ENCODE measurements at regions of chr6 and their contacts with region 1.

Region 1: DNA sequence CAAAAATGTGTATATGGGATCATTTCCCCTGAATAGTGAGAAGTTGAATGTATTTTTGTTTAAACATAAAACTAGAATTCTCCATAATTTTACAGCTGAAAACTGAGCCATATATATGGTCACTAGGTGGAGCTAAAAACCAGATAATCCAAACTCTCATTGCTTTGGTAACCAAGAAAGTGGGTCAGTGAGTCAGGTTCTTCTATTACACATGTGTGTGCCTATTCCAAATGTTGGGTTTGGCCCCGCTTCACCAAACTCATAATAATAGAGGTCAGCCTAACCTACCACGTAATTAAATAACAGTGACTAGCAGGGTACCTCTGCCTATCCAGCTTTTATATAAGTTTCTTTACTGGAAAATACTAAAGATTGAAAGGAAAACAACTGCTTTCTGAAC is 19.3 kb upstream of the RNGTT start:
- DNase-seq: peak in 7 of 9 donors; percentile 29 to 62 (median 55)
- ATAC-seq: peak; percentile 94
- H3K4me3 ChIP-seq: no peak overlapping the region
- H3K4me3 Mint-ChIP-seq: no peak overlapping the region
- H3K27ac ChIP-seq: no peak overlapping the region
- H3K27ac Mint-ChIP-seq: no peak overlapping the region
- H3K4me1 ChIP-seq: no peaks in the 10 kb centered on the region
- H3K4me1 Mint-ChIP-seq: peaks cover 0 to 7% (median 0%) of the 10 kb centered on the region in 7 donors
- H3K27me3 ChIP-seq: no peaks in the 10 kb centered on the region
- H3K27me3 Mint-ChIP-seq: peaks cover 0 to 23% (median 0%) of the 10 kb centered on the region in 5 donors

Region 2: GRCh38 chr6:88992741-88993552 is 10.2 kb after region 1 on chr6:
- CTCF ChIA-PET with region 1: interaction called, 11 read pairs
- POLR2A ChIA-PET with region 1: no interaction called
- intact Hi-C with region 1: no loop called
- DNase-seq: no peak
- ATAC-seq: no peak
- H3K4me3 ChIP-seq: no peak overlapping the region
- H3K4me3 Mint-ChIP-seq: no peak overlapping the region
- H3K27ac ChIP-seq: no peak overlapping the region
- H3K27ac Mint-ChIP-seq: no peak overlapping the region
- H3K4me1 ChIP-seq: no peaks in the 10 kb centered on the region
- H3K4me1 Mint-ChIP-seq: peaks cover 0 to 7% (median 0%) of the 10 kb centered on the region in 7 donors
- H3K27me3 ChIP-seq: no peaks in the 10 kb centered on the region
- H3K27me3 Mint-ChIP-seq: peaks cover 0 to 2% (median 0%) of the 10 kb centered on the region in 5 donors

Region 3: DNA sequence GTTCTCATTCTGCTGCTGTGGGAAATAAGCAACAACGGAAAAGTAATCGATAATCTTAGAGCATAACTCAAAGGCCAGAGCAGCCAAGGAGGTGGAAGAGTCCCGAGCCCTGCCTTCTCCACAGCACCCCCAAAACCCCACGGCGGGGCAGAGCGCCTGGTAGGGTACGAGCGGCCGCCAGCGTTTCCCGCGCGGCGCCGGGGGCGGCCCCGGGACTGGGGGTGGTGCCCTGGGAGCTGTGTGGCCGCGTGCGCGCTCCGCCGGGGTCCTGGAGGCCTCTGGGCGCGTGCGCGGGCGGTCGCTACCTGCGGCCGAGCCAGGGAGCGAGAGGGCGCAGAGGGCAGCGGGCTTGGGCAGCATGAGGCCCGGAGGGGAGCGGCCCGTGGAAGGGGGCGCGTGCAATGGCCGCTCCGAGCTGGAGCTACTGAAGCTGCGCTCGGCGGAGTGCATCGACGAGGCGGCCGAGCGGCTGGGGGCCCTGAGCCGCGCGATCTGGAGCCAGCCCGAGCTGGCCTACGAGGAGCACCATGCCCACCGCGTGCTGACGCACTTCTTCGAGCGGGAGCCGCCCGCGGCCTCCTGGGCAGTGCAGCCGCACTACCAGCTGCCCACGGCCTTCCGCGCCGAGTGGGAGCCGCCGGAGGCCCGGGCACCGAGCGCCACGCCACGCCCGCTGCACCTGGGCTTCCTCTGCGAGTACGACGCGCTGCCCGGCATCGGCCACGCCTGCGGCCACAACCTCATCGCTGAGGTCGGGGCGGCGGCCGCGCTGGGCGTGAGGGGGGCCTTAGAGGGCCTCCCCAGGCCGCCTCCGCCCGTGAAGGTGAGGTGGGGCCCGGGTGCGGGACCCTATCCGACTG is 163.3 kb after region 1 on chr6 and contains the start of gene PM20D2:
- CTCF ChIA-PET with region 1: interaction called, 8 read pairs
- POLR2A ChIA-PET with region 1: interaction called, 3 read pairs
- intact Hi-C with region 1: loop called (anchors 1 to 2 kb)
- DNase-seq: peak; percentile 45 to 78 (median 59)
- ATAC-seq: peak; percentile 84
- H3K4me3 ChIP-seq: peak within 1 kb of the TSS; percentile 58
- H3K4me3 Mint-ChIP-seq: peak within 1 kb of the TSS; percentile 86 to 99 (median 94)
- H3K27ac ChIP-seq: peak within 1 kb of the TSS; percentile 73
- H3K27ac Mint-ChIP-seq: peak within 1 kb of the TSS; percentile 84 to 98 (median 95)
- H3K4me1 ChIP-seq: peaks cover 5 to 10% of the 10 kb centered on the region in 2 donors
- H3K4me1 Mint-ChIP-seq: peaks cover 16 to 39% (median 23%) of the 10 kb centered on the region in 7 donors
- H3K27me3 ChIP-seq: no peaks in the 10 kb centered on the region
- H3K27me3 Mint-ChIP-seq: peaks cover 0 to 14% (median 0%) of the 10 kb centered on the region in 5 donors
- total RNA-seq, gene PM20D2: 4.6 to 12.7 (median 9.5) TPM

Region 4: DNA sequence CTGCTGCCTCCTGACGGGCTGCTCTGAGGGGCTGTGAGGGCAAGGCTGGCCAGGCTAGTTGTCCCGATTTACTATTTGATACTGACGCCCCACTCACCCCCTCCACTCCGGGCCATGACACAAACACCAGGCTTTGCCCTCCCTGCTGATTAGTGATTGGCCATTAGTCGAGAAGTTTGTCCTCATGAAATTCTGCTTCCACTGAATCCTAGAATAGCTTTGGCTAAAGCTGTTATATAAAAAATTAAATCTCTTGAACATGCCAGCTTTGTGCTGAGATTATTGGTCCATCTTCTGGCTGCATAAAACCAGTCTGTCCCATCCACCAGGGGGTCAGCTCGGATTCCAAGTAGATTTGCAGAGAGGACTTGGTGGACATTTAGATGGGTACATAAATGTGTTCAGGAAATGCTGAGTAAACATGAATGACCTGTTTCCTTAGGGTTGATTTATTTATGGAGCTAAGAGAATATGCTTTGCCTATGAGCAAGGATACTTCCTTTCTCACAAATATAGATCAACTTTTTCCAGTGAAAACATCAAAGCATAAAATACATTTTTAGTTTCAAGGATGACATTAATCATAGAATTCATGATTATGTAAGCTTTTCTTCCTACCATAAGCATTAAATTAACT is 332.6 kb after region 1 on chr6 and contains the start of gene GABRR2:
- CTCF ChIA-PET with region 1: interaction called, 3 read pairs
- POLR2A ChIA-PET with region 1: no interaction called
- intact Hi-C with region 1: loop called in 1 of 2 experiments (anchors 5 kb)
- DNase-seq: no peak
- ATAC-seq: no peak
- H3K4me3 ChIP-seq: no peak within 1 kb of the TSS
- H3K4me3 Mint-ChIP-seq: no peak within 1 kb of the TSS
- H3K27ac ChIP-seq: no peak within 1 kb of the TSS
- H3K27ac Mint-ChIP-seq: no peak within 1 kb of the TSS
- H3K4me1 ChIP-seq: no peaks in the 10 kb centered on the region
- H3K4me1 Mint-ChIP-seq: peaks cover 0 to 12% (median 4%) of the 10 kb centered on the region in 7 donors
- H3K27me3 ChIP-seq: no peaks in the 10 kb centered on the region
- H3K27me3 Mint-ChIP-seq: peaks cover 0 to 5% (median 0%) of the 10 kb centered on the region in 5 donors
- total RNA-seq, gene GABRR2: 0.40 to 1.9 (median 1.5) TPM

Region 5: DNA sequence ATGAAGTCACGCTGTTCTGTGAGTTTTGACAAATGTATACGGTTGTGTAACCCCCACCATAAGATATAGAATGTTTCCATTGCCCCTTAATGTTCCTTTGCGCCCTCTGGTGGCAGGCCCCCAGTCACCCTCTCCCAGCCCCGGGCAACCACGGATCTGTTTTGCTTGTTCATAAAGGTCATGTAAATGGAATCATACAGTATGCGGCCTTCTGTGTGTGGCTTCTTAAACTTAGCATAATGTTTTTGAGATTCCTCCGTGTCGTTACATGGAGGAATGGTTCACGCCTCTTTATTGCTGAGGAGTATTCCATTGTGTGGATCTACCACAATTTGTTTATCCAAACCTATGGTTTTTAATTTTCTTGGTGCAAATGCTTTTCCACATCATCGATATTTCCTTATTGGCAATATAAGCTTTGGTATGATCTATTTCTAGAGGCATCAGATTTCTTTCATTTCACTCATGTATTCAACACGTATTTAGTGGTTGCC is 627.5 kb after region 1 on chr6:
- CTCF ChIA-PET with region 1: interaction called, 13 read pairs
- POLR2A ChIA-PET with region 1: no interaction called
- intact Hi-C with region 1: loop called (anchors 1 to 5 kb)
- DNase-seq: peak; percentile 34 to 75 (median 65)
- ATAC-seq: peak; percentile 91
- H3K4me3 ChIP-seq: no peak overlapping the region
- H3K4me3 Mint-ChIP-seq: no peak overlapping the region
- H3K27ac ChIP-seq: no peak overlapping the region
- H3K27ac Mint-ChIP-seq: no peak overlapping the region
- H3K4me1 ChIP-seq: no peaks in the 10 kb centered on the region
- H3K4me1 Mint-ChIP-seq: peaks cover 0 to 17% (median 0%) of the 10 kb centered on the region in 7 donors
- H3K27me3 ChIP-seq: no peaks in the 10 kb centered on the region
- H3K27me3 Mint-ChIP-seq: no peaks in the 10 kb centered on the region

Region 6: DNA sequence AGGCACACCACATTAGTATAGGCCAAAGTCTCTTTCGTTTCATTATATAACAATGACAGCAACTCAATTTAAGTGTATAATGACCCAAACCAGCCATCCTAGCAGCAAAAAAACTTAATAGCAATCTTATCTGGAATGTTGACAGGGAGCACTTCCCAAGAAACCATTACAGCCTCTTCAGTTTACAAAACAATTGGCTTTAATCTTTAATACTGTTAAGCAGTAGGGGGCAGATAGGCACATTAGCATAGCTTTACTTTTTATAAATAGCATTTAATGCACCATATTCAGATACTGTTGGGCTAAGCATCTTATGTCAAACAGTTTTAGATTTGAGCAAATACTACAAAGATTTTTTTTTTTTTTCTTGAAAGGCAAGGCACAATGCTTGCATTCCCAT is 1797.4 kb after region 1 on chr6:
- CTCF ChIA-PET with region 1: no interaction called
- POLR2A ChIA-PET with region 1: no interaction called
- intact Hi-C with region 1: no loop called
- DNase-seq: no peak
- ATAC-seq: no peak
- H3K4me3 ChIP-seq: no peak overlapping the region
- H3K4me3 Mint-ChIP-seq: no peak overlapping the region
- H3K27ac ChIP-seq: no peak overlapping the region
- H3K27ac Mint-ChIP-seq: no peak overlapping the region
- H3K4me1 ChIP-seq: no peaks in the 10 kb centered on the region
- H3K4me1 Mint-ChIP-seq: peaks cover 0 to 1% (median 0%) of the 10 kb centered on the region in 7 donors
- H3K27me3 ChIP-seq: no peaks in the 10 kb centered on the region
- H3K27me3 Mint-ChIP-seq: peaks cover 10 to 33% (median 21%) of the 10 kb centered on the region in 5 donors